GM10248 (cell line): ENCODE measurements at regions of chr20 and their contacts with region 1.

Region 1: GRCh38 chr20:5608442-5609161 is 141.6 kb upstream of the SHLD1 start:
- DNase-seq: no peak
- CTCF ChIP-seq: no peak

Region 2: GRCh38 chr20:5592823-5593739 is 15.5 kb before region 1 on chr20:
- CTCF ChIA-PET with region 1: interaction called, 7 read pairs
- POLR2A ChIA-PET with region 1: interaction called, 11 read pairs
- DNase-seq: no peak
- CTCF ChIP-seq: no peak

Region 3: GRCh38 chr20:5633751-5634365 is 25.3 kb after region 1 on chr20:
- CTCF ChIA-PET with region 1: no interaction called
- POLR2A ChIA-PET with region 1: no interaction called
- DNase-seq: no peak
- CTCF ChIP-seq: no peak